Psoas muscle (tissue), 8 donors: ENCODE measurements at regions of chr5 and their contacts with region 1.

Region 1: DNA sequence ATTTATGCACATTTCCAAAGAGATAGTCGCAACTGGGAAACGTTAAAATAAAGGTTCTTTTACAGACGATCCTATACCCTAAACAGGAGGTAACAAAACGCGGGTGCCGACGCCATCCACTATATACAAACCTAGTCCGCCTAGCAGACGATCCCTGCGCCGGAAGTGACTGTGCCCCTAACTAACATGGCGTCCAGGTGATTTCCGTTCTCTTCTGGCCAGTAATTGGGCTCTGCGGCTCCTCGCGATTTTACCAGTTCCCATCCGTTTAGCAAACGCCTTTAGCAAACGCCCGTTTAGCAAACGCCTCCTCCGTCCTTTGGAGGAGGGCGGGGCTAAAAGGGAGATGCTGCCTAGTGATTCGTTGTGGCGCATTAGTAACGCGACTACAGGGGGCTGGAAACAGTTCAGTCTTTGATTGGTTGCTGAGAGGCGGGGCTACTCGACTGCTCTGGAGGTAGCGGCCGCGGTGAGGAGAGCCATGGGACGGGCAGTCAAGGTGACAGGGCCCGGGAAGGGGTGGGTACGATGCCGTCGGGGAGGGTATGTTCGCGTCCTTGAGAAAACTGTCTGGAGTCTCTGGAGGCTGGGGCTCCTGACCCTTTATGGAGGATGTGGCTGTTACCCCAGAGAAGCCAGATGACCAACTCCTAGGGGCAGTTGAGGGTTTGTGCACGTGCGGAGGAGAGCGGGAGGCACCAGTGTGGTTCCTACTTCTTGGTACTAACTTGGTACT is at the start of gene LYRM7:
- DNase-seq: peak; percentile 95 to 96
- ATAC-seq: peak; percentile 98 to 99 (median 99)
- H3K4me3 ChIP-seq: peak within 1 kb of the TSS; percentile 84
- H3K27ac ChIP-seq: peak within 1 kb of the TSS; percentile 85
- H3K4me1 ChIP-seq: peaks cover 10% of the 10 kb centered on the region
- H3K27me3 ChIP-seq: no peaks in the 10 kb centered on the region
- CTCF ChIP-seq: no peak
- total RNA-seq, gene LYRM7: 21.4 to 31.0 (median 26.1) TPM

Region 2: GRCh38 chr5:131263648-131264450 is 93.1 kb after region 1 on chr5 and contains the start of gene CDC42SE2:
- intact Hi-C with region 1: loop called (anchors 2 to 5 kb)
- DNase-seq: peak; percentile 87 to 91
- ATAC-seq: peak; percentile 96 to 99 (median 99)
- H3K4me3 ChIP-seq: peak within 1 kb of the TSS; percentile 99
- H3K27ac ChIP-seq: peak within 1 kb of the TSS; percentile 88
- H3K4me1 ChIP-seq: peaks cover 28% of the 10 kb centered on the region
- H3K27me3 ChIP-seq: no peaks in the 10 kb centered on the region
- CTCF ChIP-seq: no peak
- total RNA-seq, gene CDC42SE2: 8.5 to 11.9 (median 10.5) TPM